ENCODE measurements at regions of chr11 and their contacts with region 1.

Region 1: GRCh38 chr11:120511116-120511819 is at the start of gene GRIK4:
- DNase-seq: peak; percentile 90
- H3K4me3 ChIP-seq: peak within 1 kb of the TSS; percentile 41
- H3K27ac ChIP-seq: no peak within 1 kb of the TSS
- H3K4me1 ChIP-seq: no peaks in the 10 kb centered on the region
- H3K27me3 ChIP-seq: peaks cover 41% of the 10 kb centered on the region
- CTCF ChIP-seq: peak; percentile 97
- total RNA-seq, gene GRIK4: not detected in 2 replicates

Region 2: GRCh38 chr11:120500414-120501071 is 10.7 kb before region 1 on chr11:
- CTCF ChIA-PET with region 1: no interaction called
- POLR2A ChIA-PET with region 1: no interaction called
- intact Hi-C with region 1: no loop called
- DNase-seq: no peak
- H3K4me3 ChIP-seq: no peak overlapping the region
- H3K27ac ChIP-seq: no peak overlapping the region
- H3K4me1 ChIP-seq: no peaks in the 10 kb centered on the region
- H3K27me3 ChIP-seq: peaks cover 6% of the 10 kb centered on the region
- CTCF ChIP-seq: no peak

Region 3: DNA sequence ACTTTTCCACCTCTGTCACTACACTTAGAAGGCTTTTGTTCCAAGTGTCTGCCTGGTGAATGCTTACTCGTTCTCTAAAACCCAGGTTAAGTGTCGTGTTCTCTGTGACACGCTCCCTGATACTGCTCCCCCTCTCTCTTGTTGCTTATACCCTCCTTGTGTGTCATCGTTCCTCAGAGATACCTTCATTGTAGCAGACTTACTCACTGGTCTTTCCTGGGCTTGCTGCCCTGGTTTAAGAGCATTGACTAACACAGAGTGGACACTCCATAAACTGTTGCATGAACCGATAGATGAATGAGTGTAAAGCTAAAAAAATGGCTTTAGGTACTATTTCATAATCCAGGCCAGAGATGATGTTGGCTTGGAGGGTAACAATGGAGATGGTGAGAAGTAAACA is 171.6 kb after region 1 on chr11:
- CTCF ChIA-PET with region 1: interaction called, 20 read pairs
- POLR2A ChIA-PET with region 1: no interaction called
- intact Hi-C with region 1: loop called (anchors 1 kb)
- DNase-seq: no peak
- H3K4me3 ChIP-seq: no peak overlapping the region
- H3K27ac ChIP-seq: no peak overlapping the region
- H3K4me1 ChIP-seq: no peaks in the 10 kb centered on the region
- H3K27me3 ChIP-seq: peaks cover 35% of the 10 kb centered on the region
- CTCF ChIP-seq: no peak

Region 4: DNA sequence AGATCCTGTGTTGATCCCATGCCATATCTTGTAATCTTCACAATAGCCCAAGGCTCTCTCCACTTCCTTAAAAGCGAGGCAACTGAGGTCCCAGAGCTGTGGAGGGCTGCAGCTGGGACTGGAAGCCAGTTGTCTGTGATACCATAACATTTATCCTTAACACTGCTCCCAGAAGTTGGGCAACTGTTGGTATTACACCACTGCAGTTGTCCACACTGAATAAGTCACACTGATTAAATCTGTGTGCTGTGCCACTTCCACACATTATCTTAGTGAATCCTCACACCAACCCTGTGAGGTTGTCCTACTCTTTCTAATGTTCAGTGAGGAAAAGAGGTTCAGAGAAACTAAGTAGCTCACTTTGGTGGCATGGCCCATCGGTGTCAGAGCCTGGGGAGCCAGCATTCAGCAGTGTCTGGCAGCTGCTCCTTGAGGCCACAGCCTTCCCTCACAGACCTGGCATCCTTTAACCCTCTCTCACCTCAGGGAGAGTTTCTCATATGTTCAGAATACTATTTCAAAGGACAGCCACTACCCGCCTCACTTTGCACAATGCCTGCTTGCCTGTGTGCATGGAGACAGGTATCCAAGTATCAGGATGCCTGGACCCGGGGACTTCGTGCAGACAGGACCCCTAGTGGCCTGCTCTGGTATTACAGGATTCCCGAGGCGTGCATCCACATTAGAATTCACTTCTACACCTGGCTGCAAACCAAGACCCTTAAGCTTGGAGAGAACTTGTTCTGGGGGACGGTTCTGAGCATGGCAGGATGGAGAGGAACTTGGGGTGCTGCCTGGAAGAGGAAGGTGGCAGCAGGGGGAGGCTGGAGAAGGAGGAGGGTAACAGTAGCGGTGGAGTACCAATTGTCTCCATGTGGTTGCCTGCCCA is 290.8 kb after region 1 on chr11:
- CTCF ChIA-PET with region 1: no interaction called
- POLR2A ChIA-PET with region 1: no interaction called
- intact Hi-C with region 1: loop called (anchors 1 kb)
- DNase-seq: peak; percentile 65
- H3K4me3 ChIP-seq: no peak overlapping the region
- H3K27ac ChIP-seq: no peak overlapping the region
- H3K4me1 ChIP-seq: no peaks in the 10 kb centered on the region
- H3K27me3 ChIP-seq: peaks cover 5% of the 10 kb centered on the region
- CTCF ChIP-seq: peak; percentile 95

Region 5: DNA sequence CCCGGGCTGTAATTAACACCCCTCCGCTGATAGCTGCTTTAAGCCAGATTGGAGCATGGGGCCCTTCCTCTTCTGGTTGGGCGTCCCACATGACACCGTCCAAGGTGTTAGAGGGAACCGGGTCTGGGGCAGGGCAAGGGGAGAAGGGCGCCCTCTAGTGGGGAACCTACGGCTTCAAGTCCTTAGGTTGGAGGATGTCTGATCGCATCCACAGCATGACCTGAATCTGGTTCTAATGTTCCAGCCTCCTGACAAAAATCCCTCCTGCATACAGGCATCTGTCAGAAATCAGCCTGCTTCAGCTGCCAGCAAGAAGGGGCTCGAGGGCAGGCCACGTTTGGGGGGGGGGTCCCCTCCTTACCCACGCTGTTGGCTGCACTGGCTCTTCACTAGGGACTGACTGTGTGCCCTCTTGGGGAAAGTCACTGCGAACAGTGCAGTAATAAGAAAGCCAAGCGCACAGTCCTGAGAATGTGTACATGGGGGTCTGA is 418.4 kb after region 1 on chr11:
- CTCF ChIA-PET with region 1: no interaction called
- POLR2A ChIA-PET with region 1: no interaction called
- intact Hi-C with region 1: loop called (anchors 2 kb)
- DNase-seq: peak; percentile 68
- H3K4me3 ChIP-seq: no peak overlapping the region
- H3K27ac ChIP-seq: no peak overlapping the region
- H3K4me1 ChIP-seq: no peaks in the 10 kb centered on the region
- H3K27me3 ChIP-seq: no peaks in the 10 kb centered on the region
- CTCF ChIP-seq: peak; percentile 85

Region 6: GRCh38 chr11:120952461-120953434 is 441.5 kb after region 1 on chr11:
- CTCF ChIA-PET with region 1: interaction called, 8 read pairs
- POLR2A ChIA-PET with region 1: no interaction called
- intact Hi-C with region 1: loop called (anchors 2 kb)
- DNase-seq: peak; percentile 92
- H3K4me3 ChIP-seq: peak overlapping the region; percentile 4
- H3K27ac ChIP-seq: no peak overlapping the region
- H3K4me1 ChIP-seq: no peaks in the 10 kb centered on the region
- H3K27me3 ChIP-seq: peaks cover 37% of the 10 kb centered on the region
- CTCF ChIP-seq: peak; percentile 93

Region 7: DNA sequence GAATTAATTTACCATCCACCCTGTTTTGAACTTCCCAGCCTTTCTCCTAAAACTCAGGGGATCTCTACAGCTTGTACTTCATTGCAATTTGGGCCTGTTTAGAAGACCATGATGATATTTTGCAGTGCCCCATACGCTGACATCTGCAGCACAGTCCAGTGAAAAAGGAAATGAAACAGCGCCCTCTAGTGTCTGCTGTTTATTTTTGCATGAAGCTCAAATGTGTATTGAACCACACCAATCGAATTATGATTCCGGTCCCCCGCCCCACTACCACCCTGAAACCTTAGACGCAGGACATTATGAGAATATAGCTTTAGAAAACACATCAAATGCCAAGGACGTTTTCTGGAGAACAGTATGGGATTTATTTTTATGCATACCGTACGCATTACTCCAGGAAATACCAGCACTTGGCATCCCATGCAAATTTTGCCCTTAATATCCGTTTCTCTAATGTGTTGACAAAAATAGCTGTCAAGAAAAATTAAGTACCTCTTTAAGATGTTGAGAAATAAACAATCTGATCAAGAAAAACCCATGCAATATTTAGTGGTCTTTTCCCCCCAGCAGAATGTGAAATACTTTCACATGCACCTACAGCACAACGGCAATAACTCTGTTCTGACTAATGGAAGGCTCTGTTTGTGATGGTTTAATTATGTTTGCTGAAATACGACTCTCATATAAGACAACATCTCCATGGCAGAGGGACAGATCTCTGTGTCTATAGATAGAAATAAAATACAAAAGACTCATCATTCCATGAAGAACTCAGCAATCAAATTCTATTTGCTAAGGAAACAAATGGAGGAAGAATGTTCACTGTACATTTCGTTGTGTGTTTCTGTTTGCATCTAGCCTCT is 683.7 kb after region 1 on chr11:
- CTCF ChIA-PET with region 1: interaction called, 5 read pairs
- POLR2A ChIA-PET with region 1: no interaction called
- intact Hi-C with region 1: loop called (anchors 2 kb)
- DNase-seq: peak; percentile 83
- H3K4me3 ChIP-seq: no peak overlapping the region
- H3K27ac ChIP-seq: no peak overlapping the region
- H3K4me1 ChIP-seq: no peaks in the 10 kb centered on the region
- H3K27me3 ChIP-seq: peaks cover 24% of the 10 kb centered on the region
- CTCF ChIP-seq: peak; percentile 91

Measured in A673 (cell line).